ENCODE measurements at regions of chr3 and their contacts with region 1.

Region 1: DNA sequence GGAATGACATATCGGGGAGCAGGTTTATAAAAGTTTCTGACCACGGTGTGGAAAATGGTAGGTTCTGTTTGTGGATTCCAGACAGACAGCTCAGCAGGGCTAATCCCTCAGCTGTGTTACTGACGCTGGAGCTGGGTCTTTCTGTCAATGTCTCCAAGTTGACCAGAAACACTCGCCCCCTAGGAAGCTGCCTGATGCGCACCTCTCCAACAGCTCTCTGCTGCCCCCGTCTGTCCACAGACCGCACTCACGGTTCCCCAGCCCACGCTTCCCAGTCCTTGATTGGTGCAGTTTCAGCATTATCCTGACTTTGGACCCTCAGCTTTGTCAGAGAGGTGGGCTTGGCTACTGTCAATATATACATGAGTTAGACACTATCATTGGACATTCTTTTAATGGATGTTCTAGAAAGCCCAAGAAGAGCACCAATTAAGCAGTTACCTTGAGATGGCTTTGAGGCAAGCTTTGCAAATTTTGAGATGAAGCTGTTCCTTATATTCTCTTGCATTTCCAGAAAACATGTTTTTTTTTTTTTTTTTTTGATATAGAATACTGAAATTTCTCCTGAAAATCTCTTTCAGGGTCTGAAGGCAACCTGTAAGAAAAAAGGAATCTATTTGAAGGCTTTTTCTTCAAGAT is 98.9 kb upstream of the TBC1D5 start:
- DNase-seq: peak; percentile 72
- ATAC-seq: peak; percentile 93
- H3K4me3 Mint-ChIP-seq: no peak overlapping the region
- H3K27ac Mint-ChIP-seq: no peak overlapping the region
- H3K4me1 Mint-ChIP-seq: no peaks in the 10 kb centered on the region
- H3K27me3 Mint-ChIP-seq: no peaks in the 10 kb centered on the region
- CTCF ChIP-seq: peak; percentile 86

Region 2: GRCh38 chr3:17258823-17259436 is 582.4 kb before region 1 on chr3:
- CTCF ChIA-PET with region 1: interaction called, 5 read pairs
- POLR2A ChIA-PET with region 1: no interaction called
- intact Hi-C with region 1: loop called (anchors 1 kb)
- DNase-seq: no peak
- ATAC-seq: no peak
- H3K4me3 Mint-ChIP-seq: no peak overlapping the region
- H3K27ac Mint-ChIP-seq: no peak overlapping the region
- H3K4me1 Mint-ChIP-seq: no peaks in the 10 kb centered on the region
- H3K27me3 Mint-ChIP-seq: no peaks in the 10 kb centered on the region
- CTCF ChIP-seq: peak; percentile 73

Region 3: DNA sequence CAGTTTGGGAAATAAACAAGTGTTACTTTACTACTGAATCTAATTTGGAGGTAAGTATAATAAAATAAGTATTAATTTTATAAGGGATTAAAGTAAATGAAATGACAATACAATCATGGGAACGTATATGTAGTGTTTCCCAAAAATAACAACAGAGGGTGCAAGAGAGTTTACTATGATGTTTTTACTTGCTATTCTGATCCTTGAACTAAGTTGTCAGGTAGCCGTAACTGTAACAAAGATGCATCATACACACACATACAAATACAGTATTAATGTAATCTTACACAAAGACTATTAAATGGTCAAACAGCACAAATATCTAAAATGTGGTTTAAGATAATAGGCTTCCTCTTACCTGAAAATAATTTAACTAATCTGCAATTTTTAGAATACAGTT is 410.3 kb before region 1 on chr3:
- CTCF ChIA-PET with region 1: interaction called, 48 read pairs
- POLR2A ChIA-PET with region 1: no interaction called
- intact Hi-C with region 1: loop called (anchors 1 kb)
- DNase-seq: no peak
- ATAC-seq: no peak
- H3K4me3 Mint-ChIP-seq: no peak overlapping the region
- H3K27ac Mint-ChIP-seq: no peak overlapping the region
- H3K4me1 Mint-ChIP-seq: no peaks in the 10 kb centered on the region
- H3K27me3 Mint-ChIP-seq: no peaks in the 10 kb centered on the region
- CTCF ChIP-seq: peak; percentile 23

Region 4: GRCh38 chr3:17645072-17645698 is 196.1 kb before region 1 on chr3:
- CTCF ChIA-PET with region 1: interaction called, 140 read pairs
- POLR2A ChIA-PET with region 1: interaction called, 3 read pairs
- intact Hi-C with region 1: loop called (anchors 1 kb)
- DNase-seq: no peak
- ATAC-seq: no peak
- H3K4me3 Mint-ChIP-seq: no peak overlapping the region
- H3K27ac Mint-ChIP-seq: no peak overlapping the region
- H3K4me1 Mint-ChIP-seq: peaks cover 9% of the 10 kb centered on the region
- H3K27me3 Mint-ChIP-seq: no peaks in the 10 kb centered on the region
- CTCF ChIP-seq: peak; percentile 35

Region 5: GRCh38 chr3:17714473-17714872 is 126.8 kb before region 1 on chr3:
- CTCF ChIA-PET with region 1: no interaction called
- POLR2A ChIA-PET with region 1: no interaction called
- intact Hi-C with region 1: no loop called
- DNase-seq: no peak
- ATAC-seq: no peak
- H3K4me3 Mint-ChIP-seq: no peak overlapping the region
- H3K27ac Mint-ChIP-seq: no peak overlapping the region
- H3K4me1 Mint-ChIP-seq: peaks cover 19% of the 10 kb centered on the region
- H3K27me3 Mint-ChIP-seq: no peaks in the 10 kb centered on the region
- CTCF ChIP-seq: no peak

Region 6: DNA sequence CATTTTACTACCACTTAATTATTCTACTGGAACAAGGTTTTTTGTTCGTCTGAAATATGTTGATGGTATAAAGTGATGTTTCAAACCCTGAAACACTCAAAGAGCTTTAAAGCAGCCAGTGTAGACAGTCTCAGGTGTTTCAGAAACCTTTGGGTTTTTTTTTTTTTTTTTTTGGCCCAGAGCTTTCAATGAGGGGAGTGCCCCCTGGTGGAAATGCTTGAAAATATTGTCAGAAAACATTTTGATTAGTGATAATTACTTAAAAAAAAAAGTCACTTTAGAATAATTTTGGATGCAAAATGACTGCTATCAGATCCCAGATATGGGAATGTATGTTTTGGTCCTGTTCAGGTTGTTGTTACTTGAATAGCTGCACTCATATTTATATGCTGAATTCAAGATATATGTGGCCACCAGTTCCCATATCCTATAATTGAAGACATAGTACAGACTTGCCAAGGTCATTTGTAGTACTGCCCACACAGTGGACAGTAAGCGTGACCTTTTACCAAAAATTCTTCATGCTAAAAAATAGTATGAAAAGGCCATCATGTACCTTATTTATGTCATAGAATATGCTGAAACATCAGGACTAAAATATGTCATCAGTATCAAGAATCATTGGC is 547.9 kb after region 1 on chr3:
- CTCF ChIA-PET with region 1: interaction called, 10 read pairs
- POLR2A ChIA-PET with region 1: no interaction called
- intact Hi-C with region 1: loop called (anchors 2 kb)
- DNase-seq: no peak
- ATAC-seq: no peak
- H3K4me3 Mint-ChIP-seq: no peak overlapping the region
- H3K27ac Mint-ChIP-seq: no peak overlapping the region
- H3K4me1 Mint-ChIP-seq: no peaks in the 10 kb centered on the region
- H3K27me3 Mint-ChIP-seq: no peaks in the 10 kb centered on the region
- CTCF ChIP-seq: peak; percentile 10

Region 7: DNA sequence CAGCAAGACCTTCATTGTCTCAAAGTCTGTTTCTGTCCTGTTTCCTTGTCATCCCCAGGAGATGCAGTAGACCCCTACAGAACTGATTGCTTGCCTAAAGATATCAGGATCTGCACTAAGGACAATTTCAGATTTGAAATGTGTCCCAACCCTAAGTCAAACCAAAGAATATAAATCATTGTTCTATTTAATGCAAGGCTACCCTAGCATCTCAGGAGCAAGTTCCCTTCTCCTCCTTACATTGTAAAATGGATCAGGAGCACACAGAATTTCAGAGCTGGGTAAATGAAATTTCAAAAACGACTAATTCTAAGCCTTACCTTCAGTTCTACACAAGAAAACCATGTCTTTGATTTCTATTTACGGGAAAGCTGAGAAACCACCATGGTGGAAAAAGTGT is 946.1 kb after region 1 on chr3:
- CTCF ChIA-PET with region 1: no interaction called
- POLR2A ChIA-PET with region 1: no interaction called
- intact Hi-C with region 1: no loop called
- DNase-seq: no peak
- ATAC-seq: no peak
- H3K4me3 Mint-ChIP-seq: no peak overlapping the region
- H3K27ac Mint-ChIP-seq: no peak overlapping the region
- H3K4me1 Mint-ChIP-seq: no peaks in the 10 kb centered on the region
- H3K27me3 Mint-ChIP-seq: no peaks in the 10 kb centered on the region
- CTCF ChIP-seq: no peak

Measured in activated B cell treated with CpG ODN at 0.5 μM for 24 hours (primary cell).